ENCODE measurements at regions of chr5 and their contacts with region 1.

Region 1: GRCh38 chr5:166281433-166281832 is 2010.0 kb upstream of the WWC1 start:
- DNase-seq: no peak
- H3K4me3 ChIP-seq: no peak overlapping the region
- H3K27ac ChIP-seq: no peak overlapping the region
- H3K4me1 ChIP-seq: no peaks in the 10 kb centered on the region
- CTCF ChIP-seq: no peak

Region 2: DNA sequence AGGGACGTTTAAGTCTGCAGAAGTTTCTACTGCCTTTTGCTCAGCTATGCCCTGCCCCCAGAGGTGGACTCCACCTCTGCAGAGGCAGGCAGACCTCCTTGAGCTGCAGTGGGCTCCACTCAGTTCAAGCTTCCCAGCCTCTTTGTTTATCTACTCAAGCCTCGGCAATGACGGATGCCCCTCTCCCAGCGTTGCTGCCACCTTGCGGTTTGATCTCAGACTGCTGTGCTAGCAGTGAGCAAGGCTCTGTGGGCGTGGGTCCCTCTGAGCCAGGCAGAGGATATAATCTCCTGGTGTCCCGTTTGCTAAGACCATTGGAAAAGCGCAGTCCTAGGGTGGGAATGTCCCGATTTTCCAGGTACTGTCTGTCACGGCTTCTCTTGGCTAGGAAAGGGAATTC is 178.5 kb before region 1 on chr5:
- CTCF ChIA-PET with region 1: no interaction called
- POLR2A ChIA-PET with region 1: no interaction called
- intact Hi-C with region 1: no loop called
- DNase-seq: no peak
- H3K4me3 ChIP-seq: no peak overlapping the region
- H3K27ac ChIP-seq: no peak overlapping the region
- H3K4me1 ChIP-seq: no peaks in the 10 kb centered on the region
- CTCF ChIP-seq: no peak

Region 3: GRCh38 chr5:167233507-167234220 is 952.2 kb after region 1 on chr5:
- CTCF ChIA-PET with region 1: no interaction called
- POLR2A ChIA-PET with region 1: interaction called, 10 read pairs
- intact Hi-C with region 1: no loop called
- DNase-seq: no peak
- H3K4me3 ChIP-seq: no peak overlapping the region
- H3K27ac ChIP-seq: no peak overlapping the region
- H3K4me1 ChIP-seq: no peaks in the 10 kb centered on the region
- CTCF ChIP-seq: no peak

Measured in OCI-LY7 (cell line).